Activated CD4-positive, alpha-beta memory T cell treated with anti-CD3 and anti-CD28 coated beads for 36 hours (primary cell): ENCODE measurements at regions of chr3 and their contacts with region 1.

Region 1: GRCh38 chr3:112973325-112974177 is 1.4 kb downstream of the CD200R1 start:
- DNase-seq: peak; percentile 72
- H3K4me3 Mint-ChIP-seq: peak overlapping the region; percentile 82
- H3K27ac Mint-ChIP-seq: peak overlapping the region; percentile 85
- H3K4me1 Mint-ChIP-seq: peaks cover 87% of the 10 kb centered on the region
- H3K27me3 Mint-ChIP-seq: no peaks in the 10 kb centered on the region

Region 2: GRCh38 chr3:112143251-112143650 is 830.3 kb before region 1 on chr3:
- CTCF ChIA-PET with region 1: no interaction called
- POLR2A ChIA-PET with region 1: no interaction called
- intact Hi-C with region 1: loop called (anchors 5 kb)
- DNase-seq: no peak
- H3K4me3 Mint-ChIP-seq: peak overlapping the region; percentile 53
- H3K27ac Mint-ChIP-seq: peak overlapping the region; percentile 77
- H3K4me1 Mint-ChIP-seq: peaks cover 30% of the 10 kb centered on the region
- H3K27me3 Mint-ChIP-seq: no peaks in the 10 kb centered on the region

Region 3: DNA sequence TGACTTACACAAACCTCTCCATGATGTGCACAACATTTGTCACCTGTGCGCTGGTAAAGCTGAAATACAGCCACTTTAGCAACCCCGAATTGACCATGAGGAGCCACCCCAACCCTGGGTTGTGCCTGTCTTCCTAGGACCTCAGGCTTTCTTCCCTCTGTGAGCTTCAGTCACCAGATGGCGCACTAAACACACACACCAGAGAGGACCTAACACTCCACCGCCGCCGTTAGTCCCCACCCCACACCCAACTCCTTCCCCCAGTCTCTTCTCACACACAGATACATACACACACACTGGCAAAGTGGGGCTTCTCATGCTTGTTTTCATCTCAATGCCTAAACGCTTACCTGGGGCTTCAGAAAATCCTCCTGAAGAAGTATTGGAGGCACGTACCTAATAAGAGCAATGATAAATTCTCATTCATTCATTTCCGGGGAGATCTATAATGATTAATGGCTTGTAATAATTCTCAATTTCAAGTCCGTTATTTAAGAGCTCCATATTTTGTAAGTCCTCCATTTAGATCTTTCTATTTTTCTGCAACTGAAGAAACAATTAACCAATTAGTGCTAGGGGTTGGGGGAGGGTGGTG is 330.5 kb before region 1 on chr3:
- CTCF ChIA-PET with region 1: interaction called, 79 read pairs
- POLR2A ChIA-PET with region 1: no interaction called
- intact Hi-C with region 1: no loop called
- DNase-seq: peak; percentile 89
- H3K4me3 Mint-ChIP-seq: peak overlapping the region; percentile 63
- H3K27ac Mint-ChIP-seq: no peak overlapping the region
- H3K4me1 Mint-ChIP-seq: peaks cover 16% of the 10 kb centered on the region
- H3K27me3 Mint-ChIP-seq: peaks cover 3% of the 10 kb centered on the region

Region 4: GRCh38 chr3:112773864-112774590 is 199.5 kb before region 1 on chr3:
- CTCF ChIA-PET with region 1: interaction called, 5 read pairs
- POLR2A ChIA-PET with region 1: no interaction called
- intact Hi-C with region 1: loop called (anchors 1 kb)
- DNase-seq: peak; percentile 64
- H3K4me3 Mint-ChIP-seq: no peak overlapping the region
- H3K27ac Mint-ChIP-seq: peak overlapping the region; percentile 61
- H3K4me1 Mint-ChIP-seq: peaks cover 63% of the 10 kb centered on the region
- H3K27me3 Mint-ChIP-seq: no peaks in the 10 kb centered on the region

Region 5: GRCh38 chr3:112858410-112859069 is 115.0 kb before region 1 on chr3:
- CTCF ChIA-PET with region 1: no interaction called
- POLR2A ChIA-PET with region 1: no interaction called
- intact Hi-C with region 1: loop called (anchors 1 kb)
- DNase-seq: peak; percentile 32
- H3K4me3 Mint-ChIP-seq: peak overlapping the region; percentile 43
- H3K27ac Mint-ChIP-seq: peak overlapping the region; percentile 54
- H3K4me1 Mint-ChIP-seq: peaks cover 28% of the 10 kb centered on the region
- H3K27me3 Mint-ChIP-seq: no peaks in the 10 kb centered on the region

Region 6: GRCh38 chr3:112990672-112991602 is 17.4 kb after region 1 on chr3 and contains the start of gene GTPBP8:
- CTCF ChIA-PET with region 1: interaction called, 36 read pairs
- POLR2A ChIA-PET with region 1: interaction called, 5 read pairs
- intact Hi-C with region 1: loop called (anchors 1 kb)
- DNase-seq: peak; percentile 93
- H3K4me3 Mint-ChIP-seq: peak within 1 kb of the TSS; percentile 91
- H3K27ac Mint-ChIP-seq: peak within 1 kb of the TSS; percentile 94
- H3K4me1 Mint-ChIP-seq: peaks cover 57% of the 10 kb centered on the region
- H3K27me3 Mint-ChIP-seq: no peaks in the 10 kb centered on the region
- total RNA-seq, gene GTPBP8: 34.7 to 35.7 TPM

Region 7: DNA sequence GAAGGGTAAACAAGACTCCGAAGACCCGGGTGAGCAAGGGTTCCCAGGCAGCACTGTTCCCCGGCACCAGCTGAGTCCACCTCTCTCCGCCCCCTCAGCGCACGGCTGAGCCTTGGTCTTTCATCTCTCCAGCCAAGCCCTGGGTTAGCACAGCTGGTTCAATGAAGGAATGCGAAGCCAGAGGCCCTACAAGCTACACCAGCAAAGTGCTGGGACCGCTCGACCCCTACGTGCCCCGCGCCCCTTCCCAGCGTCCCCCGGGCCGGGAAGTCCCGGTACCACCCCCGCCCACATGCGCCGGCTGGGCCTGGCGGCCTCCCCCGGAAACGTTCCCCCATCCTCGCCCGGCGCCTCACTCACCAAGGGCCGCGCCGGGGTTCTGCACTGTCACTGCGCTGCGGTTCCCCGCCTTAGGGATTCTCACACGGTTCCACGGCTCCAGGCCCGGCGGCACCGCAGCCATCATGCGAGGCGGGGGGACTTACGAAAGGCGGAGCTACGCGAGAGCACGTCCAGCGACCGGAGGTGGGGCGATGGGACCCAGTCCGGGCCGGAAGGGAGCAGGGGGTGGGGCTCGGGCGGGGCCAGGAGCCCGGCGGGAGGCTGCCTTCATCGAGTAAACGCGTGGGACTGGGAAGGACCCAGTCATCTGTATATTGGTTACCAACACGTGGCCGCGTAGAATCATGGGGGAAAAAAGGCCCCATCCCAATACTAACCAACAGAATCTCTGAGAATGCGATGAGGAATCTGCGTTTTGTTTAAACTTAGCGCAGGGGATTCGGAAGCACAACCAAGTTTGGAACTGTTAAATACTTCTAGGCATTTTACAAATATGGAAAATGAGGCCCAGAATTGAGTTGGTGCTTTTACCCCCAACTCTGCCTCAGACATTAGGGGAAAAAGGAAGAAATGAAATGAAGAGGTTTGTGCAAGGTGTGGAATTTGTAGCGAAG is 45.9 kb after region 1 on chr3:
- CTCF ChIA-PET with region 1: interaction called, 7 read pairs
- POLR2A ChIA-PET with region 1: interaction called, 3 read pairs
- intact Hi-C with region 1: loop called (anchors 1 kb)
- DNase-seq: peak; percentile 95
- H3K4me3 Mint-ChIP-seq: peak overlapping the region; percentile 93
- H3K27ac Mint-ChIP-seq: peak overlapping the region; percentile 97
- H3K4me1 Mint-ChIP-seq: peaks cover 55% of the 10 kb centered on the region
- H3K27me3 Mint-ChIP-seq: no peaks in the 10 kb centered on the region

Region 8: GRCh38 chr3:113183748-113184661 is 210.5 kb after region 1 on chr3:
- CTCF ChIA-PET with region 1: no interaction called
- POLR2A ChIA-PET with region 1: no interaction called
- intact Hi-C with region 1: no loop called
- DNase-seq: no peak
- H3K4me3 Mint-ChIP-seq: no peak overlapping the region
- H3K27ac Mint-ChIP-seq: no peak overlapping the region
- H3K4me1 Mint-ChIP-seq: no peaks in the 10 kb centered on the region
- H3K27me3 Mint-ChIP-seq: peaks cover 2% of the 10 kb centered on the region